Panc1 (cell line): ENCODE measurements at regions of chr7 and their contacts with region 1.

Region 1: DNA sequence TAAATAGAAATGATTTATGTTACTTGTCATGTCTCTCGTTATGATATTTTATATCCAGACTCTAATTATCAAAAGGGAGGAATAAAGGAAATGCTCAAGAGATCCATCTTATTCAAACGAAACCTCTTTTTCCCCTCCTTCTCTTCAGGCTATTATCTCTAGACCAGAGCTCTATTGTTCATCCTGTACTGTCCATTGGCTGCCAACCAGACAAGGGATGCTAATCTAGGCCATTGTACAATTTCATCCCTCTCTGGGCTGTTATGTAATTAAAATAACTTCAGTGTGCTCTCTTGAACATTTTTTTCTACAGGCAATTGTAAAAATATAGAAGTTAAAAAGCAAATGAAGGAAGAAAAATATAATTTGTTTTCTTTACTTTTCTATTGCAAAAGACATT is 220.4 kb downstream of the HDAC9 start:
- DNase-seq: no peak
- ATAC-seq: no peak
- H3K4me3 ChIP-seq: no peak overlapping the region
- H3K27ac ChIP-seq: no peak overlapping the region
- H3K4me1 ChIP-seq: no peaks in the 10 kb centered on the region
- H3K27me3 ChIP-seq: no peaks in the 10 kb centered on the region
- CTCF ChIP-seq: no peak

Region 2: DNA sequence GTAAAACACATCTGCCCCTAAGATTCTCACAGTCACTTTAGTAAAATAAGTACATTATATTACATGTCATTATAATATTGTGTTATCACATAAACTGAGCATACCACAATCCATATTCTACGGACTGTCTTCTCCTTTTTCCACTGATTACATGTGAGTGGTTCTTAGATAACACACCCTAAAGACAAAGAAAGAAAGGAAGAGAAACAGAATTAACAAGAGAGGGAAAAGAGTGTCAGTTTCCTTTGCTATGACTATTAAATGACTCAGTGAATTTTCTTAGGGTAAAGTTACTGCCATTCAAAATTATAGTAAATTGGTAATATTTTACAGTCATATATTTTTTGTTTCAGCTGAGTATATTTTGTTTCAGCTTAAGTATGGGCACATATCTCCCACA is 133.1 kb after region 1 on chr7:
- CTCF ChIA-PET with region 1: no interaction called
- POLR2A ChIA-PET with region 1: interaction called, 11 read pairs
- in situ Hi-C with region 1: no loop called
- intact Hi-C with region 1: no loop called
- DNase-seq: no peak
- ATAC-seq: no peak
- H3K4me3 ChIP-seq: no peak overlapping the region
- H3K27ac ChIP-seq: no peak overlapping the region
- H3K4me1 ChIP-seq: no peaks in the 10 kb centered on the region
- H3K27me3 ChIP-seq: no peaks in the 10 kb centered on the region
- CTCF ChIP-seq: no peak

Region 3: GRCh38 chr7:18872344-18872743 is 156.4 kb after region 1 on chr7:
- CTCF ChIA-PET with region 1: no interaction called
- POLR2A ChIA-PET with region 1: interaction called, 14 read pairs
- in situ Hi-C with region 1: no loop called
- intact Hi-C with region 1: no loop called
- DNase-seq: no peak
- ATAC-seq: no peak
- H3K4me3 ChIP-seq: no peak overlapping the region
- H3K27ac ChIP-seq: no peak overlapping the region
- H3K4me1 ChIP-seq: no peaks in the 10 kb centered on the region
- H3K27me3 ChIP-seq: no peaks in the 10 kb centered on the region
- CTCF ChIP-seq: no peak